ENCODE measurements at regions of chr3 and their contacts with region 1.

Region 1: DNA sequence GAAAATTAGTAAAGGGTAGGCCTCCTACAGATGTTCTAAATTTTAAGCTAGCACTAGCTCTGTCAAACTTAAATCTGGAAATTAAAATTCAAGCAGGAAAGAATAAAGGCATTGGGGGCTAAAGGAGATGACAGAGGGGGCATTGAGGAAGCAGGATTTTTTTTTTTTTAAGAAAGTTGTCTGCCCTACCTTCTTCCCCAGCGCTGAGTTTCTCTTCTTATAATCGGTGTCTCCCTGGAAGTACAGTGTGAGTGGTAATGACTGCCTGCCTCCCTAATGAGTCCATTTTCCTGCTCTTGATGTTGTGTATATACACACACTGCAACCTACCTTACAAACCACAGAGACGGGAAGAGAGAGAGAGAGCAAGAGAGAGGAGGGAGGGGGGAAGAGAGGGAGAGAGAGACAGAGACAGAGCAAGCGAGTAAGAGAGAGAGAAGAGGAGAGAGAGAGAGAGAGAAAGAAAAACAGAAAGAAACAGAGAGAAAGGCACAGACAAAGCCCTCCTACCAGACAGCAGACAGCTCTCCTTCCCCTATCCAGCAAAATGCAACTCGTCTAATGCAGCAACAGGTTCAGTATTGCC is 47.0 kb downstream of the ZBTB20 start:
- DNase-seq: peak in 7 of 9 donors; percentile 56 to 77 (median 69)
- ATAC-seq: peak; percentile 93
- H3K4me3 ChIP-seq: peak overlapping the region; percentile 57
- H3K4me3 Mint-ChIP-seq: peak overlapping the region; percentile 84 to 95 (median 87)
- H3K27ac ChIP-seq: peak overlapping the region; percentile 62
- H3K27ac Mint-ChIP-seq: peak overlapping the region; percentile 68 to 96 (median 94)
- H3K4me1 ChIP-seq: peaks cover 11 to 12% of the 10 kb centered on the region in 2 donors
- H3K4me1 Mint-ChIP-seq: peaks cover 10 to 77% (median 67%) of the 10 kb centered on the region in 7 donors
- H3K27me3 ChIP-seq: no peaks in the 10 kb centered on the region
- H3K27me3 Mint-ChIP-seq: no peaks in the 10 kb centered on the region

Region 2: DNA sequence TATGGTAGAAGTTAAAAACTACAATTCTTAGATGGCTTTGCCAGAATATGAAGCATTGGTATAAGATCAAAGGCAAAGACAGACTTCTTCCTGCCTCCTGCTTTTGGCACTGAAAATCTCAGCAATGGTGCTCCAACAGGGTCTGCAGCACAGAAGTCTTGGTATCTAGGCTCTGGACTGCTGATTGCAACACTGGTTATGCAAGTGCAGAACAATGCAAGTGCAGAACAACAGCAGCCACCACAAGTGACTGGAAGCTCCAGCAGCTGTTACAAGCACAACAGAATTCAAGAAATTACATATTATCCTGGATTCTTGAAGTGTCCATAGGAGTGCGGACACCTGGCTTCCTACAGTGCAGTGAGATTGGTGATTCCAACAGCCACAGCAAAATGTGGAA is 13.3 kb after region 1 on chr3:
- CTCF ChIA-PET with region 1: no interaction called
- POLR2A ChIA-PET with region 1: interaction called, 4 read pairs
- intact Hi-C with region 1: loop called in 1 of 2 experiments (anchors 2 kb)
- DNase-seq: no peak
- ATAC-seq: no peak
- H3K4me3 ChIP-seq: no peak overlapping the region
- H3K4me3 Mint-ChIP-seq: no peak overlapping the region
- H3K27ac ChIP-seq: no peak overlapping the region
- H3K27ac Mint-ChIP-seq: no peak overlapping the region
- H3K4me1 ChIP-seq: peaks cover 0 to 3% of the 10 kb centered on the region in 2 donors
- H3K4me1 Mint-ChIP-seq: peaks cover 0 to 30% (median 19%) of the 10 kb centered on the region in 7 donors
- H3K27me3 ChIP-seq: no peaks in the 10 kb centered on the region
- H3K27me3 Mint-ChIP-seq: no peaks in the 10 kb centered on the region

Region 3: DNA sequence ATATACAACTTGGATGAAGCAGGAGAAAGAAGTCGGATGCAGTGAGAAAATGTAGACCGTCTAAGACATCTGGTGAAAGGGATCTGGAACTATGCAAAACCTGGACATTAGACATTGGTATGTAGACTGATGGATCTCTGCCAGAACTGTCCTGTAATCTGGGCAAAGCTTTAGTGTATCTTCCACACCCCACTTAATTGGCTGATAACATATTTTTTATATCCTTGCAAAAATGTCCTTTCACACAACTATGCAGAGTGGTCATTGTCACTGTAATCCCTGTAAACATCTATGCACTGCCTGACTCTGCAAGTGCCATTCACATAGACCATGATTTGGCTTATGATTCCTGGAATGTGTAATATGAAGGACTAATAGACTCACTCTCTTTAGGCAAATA is 1772.6 kb after region 1 on chr3:
- CTCF ChIA-PET with region 1: no interaction called
- POLR2A ChIA-PET with region 1: no interaction called
- intact Hi-C with region 1: no loop called
- DNase-seq: no peak
- ATAC-seq: no peak
- H3K4me3 ChIP-seq: no peak overlapping the region
- H3K4me3 Mint-ChIP-seq: no peak overlapping the region
- H3K27ac ChIP-seq: no peak overlapping the region
- H3K27ac Mint-ChIP-seq: no peak overlapping the region
- H3K4me1 ChIP-seq: no peaks in the 10 kb centered on the region
- H3K4me1 Mint-ChIP-seq: no peaks in the 10 kb centered on the region
- H3K27me3 ChIP-seq: no peaks in the 10 kb centered on the region
- H3K27me3 Mint-ChIP-seq: no peaks in the 10 kb centered on the region

Measured in naive thymus-derived CD4-positive, alpha-beta T cell (primary cell).